ENCODE measurements at regions of chr7 and their contacts with region 1.

Region 1: DNA sequence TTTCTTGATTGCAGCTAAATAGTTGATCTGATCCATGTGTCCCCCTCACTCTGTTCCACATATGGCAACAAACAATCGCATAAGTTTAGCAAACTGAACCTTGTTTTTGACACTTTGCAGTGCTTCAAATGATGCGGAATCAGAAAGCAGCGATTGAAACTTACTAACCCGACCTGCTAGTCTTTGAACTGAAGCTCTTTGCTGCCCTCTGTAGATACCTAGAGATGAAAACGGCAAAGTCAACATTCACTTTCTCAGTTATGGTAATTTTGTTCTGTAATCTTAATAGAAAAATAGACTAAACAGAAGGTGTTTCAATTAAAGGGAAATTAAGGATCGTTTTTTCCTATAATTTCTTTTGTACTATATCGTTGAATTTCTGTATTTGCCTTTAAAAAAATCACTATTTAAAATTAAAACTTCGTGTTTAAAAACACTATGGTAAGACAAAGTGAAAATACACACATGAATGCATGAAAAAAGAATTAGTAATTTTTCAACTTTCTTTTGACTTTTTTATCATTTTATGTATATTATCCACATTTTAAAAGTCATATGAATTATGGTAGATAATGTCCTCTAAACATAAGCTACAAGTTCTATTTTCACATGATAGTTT is 276.5 kb downstream of the MAGI2 start:
- DNase-seq: no peak
- H3K4me3 ChIP-seq: no peak overlapping the region
- CTCF ChIP-seq: peak; percentile 61

Region 2: DNA sequence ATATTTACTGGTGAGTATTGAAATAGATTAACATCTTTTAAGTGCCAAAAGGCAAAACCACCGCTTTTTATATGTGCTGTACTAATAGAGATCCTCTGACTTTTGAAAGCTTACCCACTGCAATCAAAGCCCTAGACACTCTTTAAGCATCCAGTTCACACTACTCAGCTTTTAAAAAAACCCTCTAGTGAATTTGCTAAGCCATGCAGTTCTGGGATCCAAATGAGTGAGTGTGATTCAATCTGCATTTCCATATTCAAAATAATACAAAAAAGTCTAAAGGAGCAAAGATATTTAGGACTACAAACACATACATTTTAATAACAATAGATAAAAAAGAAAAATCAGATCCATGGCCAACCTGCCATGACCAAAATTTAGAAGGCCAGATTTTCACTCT is 11.7 kb before region 1 on chr7:
- CTCF ChIA-PET with region 1: interaction called, 15 read pairs
- POLR2A ChIA-PET with region 1: no interaction called
- DNase-seq: no peak
- H3K4me3 ChIP-seq: no peak overlapping the region
- CTCF ChIP-seq: no peak

Region 3: DNA sequence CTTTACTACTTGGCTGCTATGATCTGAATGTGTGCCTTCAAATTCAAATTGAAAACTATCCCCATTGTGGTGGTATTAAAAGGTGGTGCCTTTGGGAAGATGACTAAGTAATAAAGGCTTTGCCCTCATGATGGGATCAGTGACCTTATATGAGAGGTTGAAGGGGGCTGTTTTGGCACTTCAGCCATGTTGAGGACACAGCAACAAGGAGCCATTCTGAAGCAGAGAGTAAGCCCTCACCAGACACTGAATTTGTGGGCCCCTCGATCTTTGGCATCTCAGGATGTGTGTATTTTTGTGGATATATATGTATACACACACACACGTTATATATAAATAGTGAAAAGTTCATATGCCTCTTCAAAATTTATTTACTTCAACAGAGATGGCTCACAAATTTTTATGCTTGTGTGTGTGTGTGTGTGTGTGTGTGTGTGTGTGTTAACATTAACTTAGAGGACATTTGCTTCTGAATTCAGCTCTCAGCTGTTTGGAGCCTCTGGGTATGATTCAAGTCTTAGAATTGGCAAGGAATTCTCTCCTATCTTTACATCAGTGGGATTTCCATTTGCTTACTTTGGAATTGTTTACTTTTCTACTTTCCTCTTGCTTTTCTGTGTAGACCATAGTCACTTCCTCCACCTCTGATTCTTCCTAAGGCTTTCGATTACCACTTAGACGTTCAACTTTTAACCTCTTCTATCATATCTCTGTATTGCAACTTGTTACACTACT is 209.9 kb after region 1 on chr7:
- CTCF ChIA-PET with region 1: no interaction called
- POLR2A ChIA-PET with region 1: no interaction called
- DNase-seq: no peak
- H3K4me3 ChIP-seq: no peak overlapping the region
- CTCF ChIP-seq: no peak